ENCODE measurements at regions of chr17 and their contacts with region 1.

Region 1: GRCh38 chr17:7862692-7863437 is 5.1 kb downstream of the CYB5D1 start:
- DNase-seq: peak; percentile 57
- H3K4me3 ChIP-seq: no peak overlapping the region
- H3K27ac ChIP-seq: no peak overlapping the region
- H3K4me1 ChIP-seq: peaks cover 15% of the 10 kb centered on the region
- H3K27me3 ChIP-seq: no peaks in the 10 kb centered on the region
- CTCF ChIP-seq: peak; percentile 46 to 63
- POLR2A ChIP-seq: no peak

Region 2: GRCh38 chr17:7818746-7819645 is 43.9 kb before region 1 on chr17:
- CTCF ChIA-PET with region 1: interaction called, 4 read pairs
- POLR2A ChIA-PET with region 1: no interaction called
- dilution Hi-C with region 1: no loop called
- intact Hi-C with region 1: loop called (anchors 1 kb)
- DNase-seq: no peak
- H3K4me3 ChIP-seq: no peak overlapping the region
- H3K27ac ChIP-seq: no peak overlapping the region
- H3K4me1 ChIP-seq: no peaks in the 10 kb centered on the region
- H3K27me3 ChIP-seq: peaks cover 9 to 13% of the 10 kb centered on the region in 2 experiments
- CTCF ChIP-seq: no peak
- POLR2A ChIP-seq: no peak

Region 3: GRCh38 chr17:7897773-7898172 is 34.9 kb after region 1 on chr17:
- CTCF ChIA-PET with region 1: interaction called, 58 read pairs
- POLR2A ChIA-PET with region 1: no interaction called
- dilution Hi-C with region 1: no loop called
- intact Hi-C with region 1: loop called (anchors 1 kb)
- DNase-seq: peak; percentile 51
- H3K4me3 ChIP-seq: no peak overlapping the region
- H3K27ac ChIP-seq: no peak overlapping the region
- H3K4me1 ChIP-seq: no peaks in the 10 kb centered on the region
- H3K27me3 ChIP-seq: no peaks in the 10 kb centered on the region
- CTCF ChIP-seq: peak; percentile 26 to 29
- POLR2A ChIP-seq: no peak

Measured in endothelial cell of umbilical vein (primary cell).